HEK293T (cell line): ENCODE measurements at regions of chr16 and their contacts with region 1.

Region 1: GRCh38 chr16:70267516-70267915 is 15.8 kb upstream of the EXOSC6 start:
- DNase-seq: peak; percentile 66

Region 2: DNA sequence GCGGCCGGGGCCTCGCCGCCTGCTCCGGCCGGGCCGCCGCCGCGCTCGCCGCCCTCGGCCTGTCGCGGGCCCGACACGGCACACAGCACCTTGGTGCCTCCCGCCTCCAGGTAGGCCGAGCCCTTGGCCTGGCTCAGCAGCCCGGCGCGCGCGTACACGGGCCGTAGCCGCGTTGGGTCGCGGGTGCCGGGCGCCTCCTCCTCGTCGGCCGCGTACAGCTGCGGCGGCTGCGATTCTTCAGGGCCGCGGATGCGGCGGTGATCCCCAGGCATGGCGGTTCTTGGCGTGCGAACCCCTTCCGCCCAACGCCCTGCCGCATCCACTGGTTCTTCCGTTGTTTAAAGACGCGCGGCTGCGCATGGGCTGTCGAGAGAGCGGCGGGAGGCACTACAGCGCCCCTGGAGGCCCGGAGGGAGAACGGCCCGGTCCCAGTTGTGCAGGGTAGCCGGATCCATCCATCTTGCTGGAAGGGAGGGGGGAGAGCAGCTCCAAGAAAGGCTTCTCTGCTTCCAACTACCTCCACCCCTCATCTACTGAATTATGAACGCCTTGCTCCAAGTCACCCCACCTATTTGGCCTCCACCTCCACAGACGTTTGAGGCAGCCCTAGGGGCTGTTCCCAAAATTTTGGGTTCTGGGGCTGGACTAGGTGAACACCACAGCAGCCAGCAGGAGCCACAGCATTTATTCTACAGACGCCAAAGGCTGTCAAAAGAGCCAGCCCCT is 15.7 kb before region 1 on chr16 and contains the start of gene EXOSC6:
- CTCF ChIA-PET with region 1: interaction called, 11 read pairs
- POLR2A ChIA-PET with region 1: interaction called, 3 read pairs
- DNase-seq: peak; percentile 93